Mammary epithelial cell (primary cell): ENCODE measurements at regions of chr10 and their contacts with region 1.

Region 1: DNA sequence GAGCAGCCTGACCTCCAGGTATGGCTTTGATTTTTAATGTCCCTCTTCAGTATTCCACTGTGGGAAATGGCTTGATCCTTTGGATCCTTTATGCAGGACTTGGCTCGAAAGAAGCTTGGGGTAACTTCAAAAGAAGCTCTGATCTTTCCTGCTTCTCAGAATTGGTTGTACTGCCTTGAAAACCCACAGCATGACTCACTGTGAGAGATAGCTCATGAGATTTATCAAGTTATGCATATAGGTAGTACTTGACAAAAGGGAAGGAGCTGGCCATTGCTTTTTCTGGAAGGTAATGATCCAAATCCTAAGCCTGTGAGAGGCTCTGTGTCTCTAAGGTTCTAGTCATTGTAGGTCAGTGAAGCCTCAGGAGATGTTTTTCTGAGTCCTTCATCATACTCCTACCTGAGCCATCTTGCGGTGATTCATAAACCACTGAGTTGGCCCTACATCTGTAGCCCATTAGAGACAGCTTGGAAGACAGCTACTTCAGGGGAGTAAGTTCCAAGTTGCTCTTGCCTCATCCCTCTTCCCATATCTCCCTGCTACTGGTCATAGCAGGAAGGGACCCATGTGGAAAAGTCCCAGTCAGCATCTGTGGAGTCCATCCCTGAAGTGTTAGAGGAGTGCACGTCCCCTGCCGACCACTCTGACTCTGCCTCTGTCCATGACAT is 36.7 kb upstream of the NFKB2 start:
- DNase-seq: no peak
- H3K4me3 ChIP-seq: no peak overlapping the region
- H3K27ac ChIP-seq: no peak overlapping the region
- H3K4me1 ChIP-seq: no peaks in the 10 kb centered on the region
- H3K27me3 ChIP-seq: no peaks in the 10 kb centered on the region
- CTCF ChIP-seq: no peak

Region 2: GRCh38 chr10:102175415-102175814 is 183.4 kb before region 1 on chr10:
- CTCF ChIA-PET with region 1: no interaction called
- dilution Hi-C with region 1: loop called (anchors 5 kb)
- in situ Hi-C with region 1: no loop called
- intact Hi-C with region 1: no loop called
- DNase-seq: peak; percentile 4
- H3K4me3 ChIP-seq: no peak overlapping the region
- H3K27ac ChIP-seq: no peak overlapping the region
- H3K4me1 ChIP-seq: no peaks in the 10 kb centered on the region
- H3K27me3 ChIP-seq: no peaks in the 10 kb centered on the region
- CTCF ChIP-seq: no peak

Region 3: GRCh38 chr10:102245101-102245931 is 113.5 kb before region 1 on chr10 and contains the start of gene GBF1:
- CTCF ChIA-PET with region 1: no interaction called
- dilution Hi-C with region 1: no loop called
- in situ Hi-C with region 1: no loop called
- intact Hi-C with region 1: no loop called
- DNase-seq: peak; percentile 100
- H3K4me3 ChIP-seq: peak within 1 kb of the TSS; percentile 59 to 97 (median 70)
- H3K27ac ChIP-seq: peak within 1 kb of the TSS; percentile 71
- H3K4me1 ChIP-seq: peaks cover 46% of the 10 kb centered on the region
- H3K27me3 ChIP-seq: peaks cover 2% of the 10 kb centered on the region
- CTCF ChIP-seq: no peak
- total RNA-seq, gene GBF1: 37.8 to 49.4 TPM